Activated T-helper 2 cell treated with anti-CD3 and anti-CD28 coated beads, Interferon-gamma antibody, Interleukin-2, Interleukin-4, amounts not matched to agents 10 μg/mL and 5 μg/mL and 100 μg/mL, durations not matched to agents 14 hours and 24 hours and 36 hours (primary cell): ENCODE measurements at regions of chr6 and their contacts with region 1.

Region 1: GRCh38 chr6:73704260-73704659 is 8.3 kb downstream of the CD109 start:
- DNase-seq: no peak
- H3K4me3 Mint-ChIP-seq: no peak overlapping the region
- H3K27ac Mint-ChIP-seq: peak overlapping the region; percentile 78
- H3K4me1 Mint-ChIP-seq: peaks cover 37% of the 10 kb centered on the region
- H3K27me3 Mint-ChIP-seq: no peaks in the 10 kb centered on the region

Region 2: DNA sequence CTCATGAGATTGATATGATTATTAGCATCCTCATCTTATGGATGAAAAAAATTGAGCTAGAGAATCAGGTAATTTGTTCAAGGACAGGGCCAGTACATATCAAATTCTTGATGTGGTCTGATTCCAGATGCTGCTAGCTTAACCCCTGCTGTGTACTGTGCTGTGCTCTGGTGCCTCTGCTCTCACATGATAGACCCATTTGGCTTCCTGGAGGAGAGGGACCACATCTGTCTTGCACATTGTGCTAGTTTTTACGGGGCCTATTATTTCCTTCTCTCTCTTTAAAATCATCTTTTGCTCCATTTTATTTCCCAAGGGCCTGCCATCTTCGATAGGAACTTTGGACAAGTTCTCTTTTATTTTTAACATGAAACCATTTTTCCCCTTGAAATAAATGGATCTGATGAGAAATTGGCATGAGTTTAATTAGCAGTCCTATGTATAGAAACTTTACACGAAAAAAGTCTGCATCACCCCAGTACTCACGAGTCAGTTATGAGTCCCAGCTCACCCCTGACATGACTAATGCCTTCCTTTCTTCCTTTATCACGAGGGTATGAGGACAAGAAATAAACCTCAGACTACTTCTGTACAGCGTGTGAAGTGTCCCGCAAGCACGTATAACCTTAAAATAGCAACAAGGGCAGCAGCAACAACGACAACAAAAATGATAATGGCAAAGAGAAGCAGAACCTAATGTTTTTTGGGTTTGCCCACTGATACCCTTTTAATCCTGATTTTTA is 18.2 kb after region 1 on chr6:
- intact Hi-C with region 1: loop called (anchors 1 kb)
- DNase-seq: no peak
- H3K4me3 Mint-ChIP-seq: peak overlapping the region; percentile 24
- H3K27ac Mint-ChIP-seq: peak overlapping the region; percentile 73
- H3K4me1 Mint-ChIP-seq: peaks cover 48% of the 10 kb centered on the region
- H3K27me3 Mint-ChIP-seq: no peaks in the 10 kb centered on the region

Region 3: DNA sequence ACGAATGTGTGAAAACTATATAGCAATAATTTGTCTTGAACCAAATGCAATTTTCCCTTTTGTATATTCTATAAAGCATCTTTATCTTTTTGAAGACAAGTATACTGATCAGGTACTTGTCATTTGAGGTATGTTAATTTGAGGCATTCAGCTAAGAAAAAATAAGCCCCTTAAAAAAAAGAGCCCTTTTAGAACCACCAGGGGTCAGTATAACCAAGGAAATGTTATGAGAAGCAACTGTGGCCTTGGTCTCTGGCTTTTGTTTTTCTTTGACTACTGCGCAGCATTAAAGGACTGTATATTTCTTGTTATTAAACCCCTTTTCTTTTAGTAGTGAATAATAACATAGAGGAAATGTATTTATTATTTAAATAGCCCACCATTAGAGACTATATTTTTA is 34.8 kb after region 1 on chr6:
- intact Hi-C with region 1: no loop called
- DNase-seq: no peak
- H3K4me3 Mint-ChIP-seq: no peak overlapping the region
- H3K27ac Mint-ChIP-seq: no peak overlapping the region
- H3K4me1 Mint-ChIP-seq: peaks cover 5% of the 10 kb centered on the region
- H3K27me3 Mint-ChIP-seq: no peaks in the 10 kb centered on the region